ENCODE measurements at regions of chr1 and their contacts with region 1.

Region 1: DNA sequence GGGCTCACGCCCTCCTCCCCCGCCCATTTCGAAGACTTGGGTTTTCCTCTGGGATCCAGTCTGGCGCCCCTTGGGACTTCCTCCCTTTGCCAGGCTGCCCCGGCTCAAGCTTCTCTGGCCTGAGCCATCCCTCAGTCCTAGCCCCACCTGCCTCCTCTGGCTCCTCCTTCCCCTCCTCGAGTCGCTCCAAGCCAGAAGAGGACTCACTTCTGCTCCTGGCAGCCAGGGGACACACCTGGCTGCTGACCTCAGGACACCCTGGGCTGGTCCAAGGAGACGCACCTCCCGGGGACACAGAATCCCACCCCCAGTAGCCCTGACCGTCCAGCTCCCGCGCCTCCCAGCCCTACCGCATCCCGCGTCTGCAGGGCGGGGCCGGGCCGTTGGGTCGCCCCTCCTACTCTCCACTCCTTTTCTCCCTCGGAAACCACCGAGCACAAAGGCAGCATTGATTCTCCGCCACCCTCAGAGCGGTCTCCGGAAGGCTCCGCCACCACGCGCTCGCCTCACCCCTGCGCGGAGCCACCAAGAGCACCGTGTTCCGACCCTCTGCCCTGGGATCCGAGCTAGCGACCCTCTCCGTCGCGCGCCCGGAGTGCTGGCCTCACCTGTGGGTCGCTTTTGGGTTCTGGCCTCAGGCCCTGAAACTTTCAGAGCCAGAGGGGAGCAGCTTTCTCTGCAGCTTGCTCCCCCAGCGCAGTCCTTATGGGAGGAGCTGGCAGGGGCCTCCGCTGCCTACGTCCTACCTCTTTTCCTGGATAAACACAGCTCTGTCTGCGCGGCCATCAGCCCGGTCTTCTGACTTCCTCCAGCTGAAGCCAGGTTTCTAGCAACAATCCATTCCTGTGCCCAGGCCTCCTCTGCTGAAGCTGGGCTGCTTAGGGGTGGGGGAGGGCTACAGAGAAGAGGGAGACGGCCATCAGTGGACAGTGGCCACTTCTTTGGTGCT is at the start of gene C2CD4D:
- DNase-seq: peak; percentile 52
- ATAC-seq: peak; percentile 55
- H3K4me3 Mint-ChIP-seq: peak within 1 kb of the TSS; percentile 81
- H3K27ac Mint-ChIP-seq: peak within 1 kb of the TSS; percentile 35
- H3K4me1 Mint-ChIP-seq: peaks cover 52% of the 10 kb centered on the region
- H3K27me3 Mint-ChIP-seq: peaks cover 3% of the 10 kb centered on the region
- CTCF ChIP-seq: no peak
- total RNA-seq, gene C2CD4D: 0.15 TPM in 1 of 2 replicates, not detected in the other

Region 2: GRCh38 chr1:150293433-150294168 is 1546.1 kb before region 1 on chr1 and contains the start of gene MRPS21:
- CTCF ChIA-PET with region 1: no interaction called
- POLR2A ChIA-PET with region 1: no interaction called
- intact Hi-C with region 1: no loop called
- DNase-seq: peak; percentile 77
- ATAC-seq: peak; percentile 97
- H3K4me3 Mint-ChIP-seq: peak within 1 kb of the TSS; percentile 94
- H3K27ac Mint-ChIP-seq: peak within 1 kb of the TSS; percentile 99
- H3K4me1 Mint-ChIP-seq: peaks cover 30% of the 10 kb centered on the region
- H3K27me3 Mint-ChIP-seq: no peaks in the 10 kb centered on the region
- CTCF ChIP-seq: no peak
- total RNA-seq, gene MRPS21: 66.8 and 69.2 TPM in 2 replicates

Region 3: GRCh38 chr1:151070474-151071276 is 769.1 kb before region 1 on chr1 and contains the start of gene GABPB2:
- CTCF ChIA-PET with region 1: no interaction called
- POLR2A ChIA-PET with region 1: no interaction called
- intact Hi-C with region 1: no loop called
- DNase-seq: peak; percentile 89
- ATAC-seq: peak; percentile 87
- H3K4me3 Mint-ChIP-seq: peak within 1 kb of the TSS; percentile 97
- H3K27ac Mint-ChIP-seq: peak within 1 kb of the TSS; percentile 100
- H3K4me1 Mint-ChIP-seq: peaks cover 16% of the 10 kb centered on the region
- H3K27me3 Mint-ChIP-seq: no peaks in the 10 kb centered on the region
- CTCF ChIP-seq: peak; percentile 25
- total RNA-seq, gene GABPB2: 13.8 and 17.4 TPM in 2 replicates

Region 4: GRCh38 chr1:151534665-151535278 is 305.0 kb before region 1 on chr1:
- CTCF ChIA-PET with region 1: interaction called, 5 read pairs
- POLR2A ChIA-PET with region 1: no interaction called
- intact Hi-C with region 1: loop called (anchors 2 kb)
- DNase-seq: peak; percentile 49
- ATAC-seq: peak; percentile 71
- H3K4me3 Mint-ChIP-seq: no peak overlapping the region
- H3K27ac Mint-ChIP-seq: no peak overlapping the region
- H3K4me1 Mint-ChIP-seq: peaks cover 6% of the 10 kb centered on the region
- H3K27me3 Mint-ChIP-seq: no peaks in the 10 kb centered on the region
- CTCF ChIP-seq: no peak

Region 5: DNA sequence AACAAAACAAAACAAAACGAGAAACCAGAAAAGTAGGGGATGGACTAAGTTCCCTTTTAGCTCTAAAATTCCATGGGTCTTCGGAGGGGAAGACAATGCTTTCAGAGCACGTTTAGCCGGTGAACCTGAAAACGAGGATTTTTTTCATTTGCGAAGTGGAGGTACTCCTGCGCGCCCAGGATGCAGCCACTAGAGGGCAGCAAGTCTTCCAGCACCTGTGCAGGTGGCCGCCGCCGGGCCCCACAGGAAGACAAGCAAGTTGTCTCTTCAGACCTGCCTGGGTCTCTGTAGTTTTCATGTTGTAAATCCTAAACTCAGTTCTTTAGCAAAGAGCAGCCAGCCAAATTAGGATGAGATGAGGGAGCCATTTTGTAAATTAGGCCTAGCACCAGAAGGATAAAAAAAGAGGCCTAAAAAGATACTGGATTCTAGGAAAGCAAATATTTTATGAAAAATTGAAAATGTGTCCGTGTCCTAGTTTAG is 245.5 kb before region 1 on chr1:
- CTCF ChIA-PET with region 1: interaction called, 5 read pairs
- POLR2A ChIA-PET with region 1: no interaction called
- intact Hi-C with region 1: loop called (anchors 1 kb)
- DNase-seq: peak; percentile 66
- ATAC-seq: peak; percentile 97
- H3K4me3 Mint-ChIP-seq: peak overlapping the region; percentile 69
- H3K27ac Mint-ChIP-seq: peak overlapping the region; percentile 46
- H3K4me1 Mint-ChIP-seq: peaks cover 10% of the 10 kb centered on the region
- H3K27me3 Mint-ChIP-seq: peaks cover 11% of the 10 kb centered on the region
- CTCF ChIP-seq: peak; percentile 45

Region 6: DNA sequence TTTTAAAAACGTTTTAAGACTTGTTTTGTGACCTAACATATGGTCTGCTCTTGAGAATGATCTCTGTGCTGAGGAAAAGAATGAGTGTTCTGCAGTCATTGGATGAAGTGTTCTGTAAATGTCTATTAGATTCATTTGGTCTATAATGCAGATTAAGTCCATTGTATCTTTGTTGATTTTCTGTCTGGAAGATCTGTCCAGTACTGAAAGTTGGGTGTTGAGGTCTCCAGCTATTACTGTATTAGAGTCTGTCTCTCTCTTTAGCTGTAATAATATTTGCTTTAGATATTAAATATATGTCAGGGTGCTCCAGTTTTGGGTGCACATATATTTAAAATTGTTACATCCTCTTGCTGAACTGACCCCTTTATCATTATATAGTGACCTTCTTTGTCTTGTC is 166.3 kb before region 1 on chr1:
- CTCF ChIA-PET with region 1: no interaction called
- POLR2A ChIA-PET with region 1: no interaction called
- intact Hi-C with region 1: loop called (anchors 10 kb)
- DNase-seq: no peak
- ATAC-seq: no peak
- H3K4me3 Mint-ChIP-seq: no peak overlapping the region
- H3K27ac Mint-ChIP-seq: no peak overlapping the region
- H3K4me1 Mint-ChIP-seq: no peaks in the 10 kb centered on the region
- H3K27me3 Mint-ChIP-seq: no peaks in the 10 kb centered on the region
- CTCF ChIP-seq: no peak

Region 7: DNA sequence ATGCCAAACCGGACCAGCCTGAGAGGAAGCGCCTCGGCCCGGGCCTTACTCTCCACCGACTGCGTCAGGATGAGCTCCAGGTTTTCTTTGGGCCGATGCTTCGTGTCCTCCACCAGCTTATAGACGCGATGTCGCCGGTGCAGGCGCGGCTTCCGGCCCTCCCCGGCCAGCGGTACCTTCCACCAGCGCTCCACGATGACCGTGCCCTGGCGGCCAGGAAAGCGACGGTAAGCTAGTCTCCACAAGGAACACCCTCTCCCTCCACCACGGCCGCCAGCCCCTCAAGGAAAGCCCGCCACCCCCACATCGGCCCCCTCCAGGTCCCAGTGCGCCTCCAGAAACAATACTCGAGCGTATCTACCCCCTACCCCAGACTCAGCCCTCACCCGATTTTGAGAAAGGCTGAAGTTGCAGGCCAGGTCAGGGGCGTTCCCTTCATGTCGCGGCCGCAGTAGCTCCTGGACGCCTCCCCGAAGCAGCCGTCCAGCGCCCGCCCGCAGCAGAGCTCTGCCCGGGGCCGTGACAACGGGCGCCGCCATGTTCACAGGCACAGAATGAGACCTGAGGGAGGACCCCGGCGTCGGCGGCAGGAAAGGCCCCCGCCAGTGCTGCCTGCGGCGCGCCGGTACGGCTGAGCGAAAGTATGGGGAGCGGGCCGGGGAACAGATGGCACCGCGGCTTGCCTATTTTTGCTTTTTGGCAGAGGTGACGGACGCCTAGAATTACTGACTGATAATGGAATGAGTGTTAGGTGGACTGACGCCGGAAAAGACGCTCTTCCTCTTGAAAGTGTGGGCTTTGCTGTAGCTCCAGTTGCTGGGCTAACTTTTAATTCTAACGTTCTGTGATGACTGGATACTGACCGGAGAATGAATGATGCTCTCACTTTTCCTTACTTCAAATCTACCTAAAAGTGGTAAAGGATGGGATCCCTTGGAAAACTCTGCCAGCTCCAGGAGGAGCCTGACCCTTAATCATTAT is 76.5 kb before region 1 on chr1 and contains the start of gene MRPL9:
- CTCF ChIA-PET with region 1: interaction called, 4 read pairs
- POLR2A ChIA-PET with region 1: no interaction called
- intact Hi-C with region 1: loop called (anchors 1 kb)
- DNase-seq: peak; percentile 80
- ATAC-seq: peak; percentile 99
- H3K4me3 Mint-ChIP-seq: peak within 1 kb of the TSS; percentile 92
- H3K27ac Mint-ChIP-seq: peak within 1 kb of the TSS; percentile 91
- H3K4me1 Mint-ChIP-seq: peaks cover 20% of the 10 kb centered on the region
- H3K27me3 Mint-ChIP-seq: no peaks in the 10 kb centered on the region
- CTCF ChIP-seq: no peak
- total RNA-seq, gene MRPL9: 96.2 and 105 TPM in 2 replicates

Region 8: DNA sequence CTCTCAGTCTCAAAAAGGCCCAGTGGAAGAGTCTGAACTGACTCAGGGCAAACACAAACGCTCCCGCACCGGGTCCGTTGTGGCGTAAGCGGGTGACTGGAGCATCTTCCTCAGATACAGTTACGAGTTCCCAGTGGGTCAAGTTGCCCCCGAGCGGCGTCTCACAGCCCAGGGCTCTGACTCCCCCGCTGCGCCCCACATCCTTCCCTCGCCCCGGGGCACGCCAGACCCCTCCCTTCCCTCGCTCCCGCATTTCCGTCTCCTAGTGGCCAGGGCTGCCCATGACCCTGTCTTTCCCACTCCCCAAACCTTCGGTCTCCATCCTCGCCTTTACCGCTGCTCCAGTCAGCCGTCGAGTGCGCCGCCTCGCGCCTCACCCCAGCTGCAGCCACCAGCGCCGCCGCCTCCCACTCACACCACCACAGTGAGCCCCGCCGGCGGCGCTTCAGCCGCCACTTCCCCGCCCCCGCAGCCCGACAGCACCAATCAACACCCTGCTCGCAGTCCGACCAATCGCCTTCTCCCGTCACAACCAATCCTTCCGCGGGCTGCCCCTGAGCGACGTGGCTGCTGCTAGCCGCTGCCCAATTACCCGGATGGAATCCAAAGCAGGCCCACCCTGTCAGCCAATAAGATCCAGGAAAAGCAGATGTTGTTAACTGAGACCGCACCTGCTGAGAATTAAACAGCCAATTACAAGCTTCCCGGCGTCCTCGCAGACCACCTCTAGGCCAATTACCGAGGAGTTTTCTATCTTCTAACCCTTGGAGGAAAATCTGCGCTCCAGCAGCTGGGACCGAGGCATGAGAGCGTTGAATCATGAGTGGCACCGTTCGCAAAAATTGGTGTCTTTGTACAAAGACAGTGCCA is 49.4 kb before region 1 on chr1 and contains the start of gene TDRKH:
- CTCF ChIA-PET with region 1: no interaction called
- POLR2A ChIA-PET with region 1: interaction called, 3 read pairs
- intact Hi-C with region 1: loop called (anchors 2 kb)
- DNase-seq: peak; percentile 91
- ATAC-seq: peak; percentile 93
- H3K4me3 Mint-ChIP-seq: peak within 1 kb of the TSS; percentile 99
- H3K27ac Mint-ChIP-seq: peak within 1 kb of the TSS; percentile 91
- H3K4me1 Mint-ChIP-seq: peaks cover 21% of the 10 kb centered on the region
- H3K27me3 Mint-ChIP-seq: peaks cover 3% of the 10 kb centered on the region
- CTCF ChIP-seq: no peak
- total RNA-seq, gene TDRKH: 15.1 and 15.6 TPM in 2 replicates

Measured in activated B cell treated with CpG ODN at 0.5 μM for 24 hours (primary cell).